Common myeloid progenitor, CD34-positive (primary cell): ENCODE measurements at regions of chr5 and their contacts with region 1.

Region 1: DNA sequence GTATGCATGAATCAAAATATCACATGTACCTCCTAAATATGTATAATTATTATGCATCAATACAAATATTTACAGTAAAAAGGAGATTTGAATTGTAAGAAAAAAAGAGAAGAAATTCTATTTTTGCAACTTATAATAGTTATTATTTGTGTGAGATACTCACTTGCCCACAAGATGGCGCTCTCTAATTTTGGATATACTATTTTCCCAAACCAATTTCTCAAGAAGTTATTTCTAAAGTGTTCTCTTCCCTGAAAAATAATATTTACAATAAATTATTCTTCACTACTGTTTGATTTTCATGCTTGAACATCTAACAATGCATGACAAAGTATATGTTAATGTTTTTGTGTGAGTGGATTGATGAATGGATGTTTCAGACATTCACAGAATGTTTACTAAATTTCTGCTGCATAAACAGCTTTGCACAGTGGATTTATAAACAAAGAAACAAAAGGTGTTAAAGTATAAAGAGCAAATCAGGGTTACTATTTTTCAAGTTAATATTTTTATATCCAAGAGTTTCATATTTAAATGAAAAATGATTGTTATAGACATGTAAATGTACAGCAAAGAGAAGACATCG is 503.4 kb downstream of the PDE4D start:
- DNase-seq: peak; percentile 13 to 48 (median 30)
- H3K4me3 ChIP-seq: no peak overlapping the region
- H3K27ac ChIP-seq: no peak overlapping the region
- H3K4me1 ChIP-seq: no peaks in the 10 kb centered on the region
- H3K27me3 ChIP-seq: no peaks in the 10 kb centered on the region

Region 2: DNA sequence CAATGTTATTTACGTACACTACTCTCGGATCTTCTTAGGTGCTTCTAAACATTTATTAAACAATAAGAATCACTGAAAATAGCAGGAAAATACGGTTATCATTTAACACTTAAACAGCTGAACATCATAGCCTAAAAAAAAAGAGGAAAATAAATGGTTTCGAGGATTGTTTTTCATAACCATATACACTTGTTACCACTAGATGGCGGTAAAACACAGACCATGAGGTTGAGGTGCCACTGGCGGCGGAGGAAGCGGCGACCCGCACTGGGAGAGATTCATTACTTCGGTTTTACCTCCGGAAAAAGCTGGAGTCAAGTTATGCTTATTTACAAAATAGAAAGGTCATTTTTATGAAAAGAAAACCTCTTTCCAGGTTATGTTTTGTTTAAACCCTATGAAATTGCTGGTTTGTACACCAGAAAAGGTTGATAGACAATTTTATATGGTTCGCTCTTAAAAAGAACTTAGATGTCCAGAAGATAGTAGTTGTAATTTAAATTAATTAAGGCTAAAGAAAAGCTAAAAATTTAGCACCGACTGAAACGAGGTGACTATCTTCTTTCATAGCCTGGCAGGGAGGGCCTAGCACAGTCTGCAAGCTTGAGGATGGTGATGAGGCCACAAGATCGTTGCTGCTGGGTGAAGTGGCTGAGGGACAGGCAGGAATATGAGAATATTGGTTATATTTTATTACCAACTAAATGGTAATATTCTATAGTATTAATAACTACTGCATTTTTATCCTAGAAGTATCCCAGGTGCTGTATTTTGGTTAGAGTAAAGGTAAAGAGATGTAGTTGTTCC is 201.5 kb before region 1 on chr5:
- CTCF ChIA-PET with region 1: interaction called, 10 read pairs
- POLR2A ChIA-PET with region 1: no interaction called
- DNase-seq: peak; percentile 69 to 86 (median 84)
- H3K4me3 ChIP-seq: peak overlapping the region in 5 of 7 experiments; percentile 30 to 70 (median 52)
- H3K27ac ChIP-seq: no peak overlapping the region
- H3K4me1 ChIP-seq: peaks cover 0 to 5% (median 2%) of the 10 kb centered on the region in 4 experiments
- H3K27me3 ChIP-seq: no peaks in the 10 kb centered on the region

Region 3: GRCh38 chr5:59506285-59506877 is 116.2 kb after region 1 on chr5:
- CTCF ChIA-PET with region 1: interaction called, 11 read pairs
- POLR2A ChIA-PET with region 1: no interaction called
- DNase-seq: peak; percentile 50 to 77 (median 71)
- H3K4me3 ChIP-seq: no peak overlapping the region
- H3K27ac ChIP-seq: no peak overlapping the region
- H3K4me1 ChIP-seq: peaks cover 0 to 10% (median 0%) of the 10 kb centered on the region in 4 experiments
- H3K27me3 ChIP-seq: no peaks in the 10 kb centered on the region

Region 4: DNA sequence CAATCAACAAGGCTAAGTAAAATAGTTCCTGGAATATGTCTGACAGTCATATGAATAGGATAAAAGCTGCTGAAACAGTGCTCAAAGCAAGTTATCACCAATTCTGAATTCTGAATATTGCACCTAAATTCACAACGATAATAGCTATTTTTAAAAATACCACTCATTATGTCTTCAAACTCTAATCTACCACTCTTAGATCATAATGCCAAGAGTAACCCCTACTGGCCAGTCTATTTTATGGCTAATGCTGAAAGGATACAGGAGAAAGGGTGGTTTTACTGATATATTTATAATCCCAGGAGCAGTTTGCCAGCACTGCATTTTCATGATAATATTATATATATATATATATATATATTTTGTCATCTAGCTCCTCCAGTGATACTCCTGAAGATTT is 270.6 kb after region 1 on chr5:
- CTCF ChIA-PET with region 1: interaction called, 37 read pairs
- POLR2A ChIA-PET with region 1: no interaction called
- DNase-seq: peak; percentile 36 to 56 (median 54)
- H3K4me3 ChIP-seq: no peak overlapping the region
- H3K27ac ChIP-seq: no peak overlapping the region
- H3K4me1 ChIP-seq: peaks cover 21 to 56% (median 38%) of the 10 kb centered on the region in 4 experiments
- H3K27me3 ChIP-seq: no peaks in the 10 kb centered on the region

Region 5: DNA sequence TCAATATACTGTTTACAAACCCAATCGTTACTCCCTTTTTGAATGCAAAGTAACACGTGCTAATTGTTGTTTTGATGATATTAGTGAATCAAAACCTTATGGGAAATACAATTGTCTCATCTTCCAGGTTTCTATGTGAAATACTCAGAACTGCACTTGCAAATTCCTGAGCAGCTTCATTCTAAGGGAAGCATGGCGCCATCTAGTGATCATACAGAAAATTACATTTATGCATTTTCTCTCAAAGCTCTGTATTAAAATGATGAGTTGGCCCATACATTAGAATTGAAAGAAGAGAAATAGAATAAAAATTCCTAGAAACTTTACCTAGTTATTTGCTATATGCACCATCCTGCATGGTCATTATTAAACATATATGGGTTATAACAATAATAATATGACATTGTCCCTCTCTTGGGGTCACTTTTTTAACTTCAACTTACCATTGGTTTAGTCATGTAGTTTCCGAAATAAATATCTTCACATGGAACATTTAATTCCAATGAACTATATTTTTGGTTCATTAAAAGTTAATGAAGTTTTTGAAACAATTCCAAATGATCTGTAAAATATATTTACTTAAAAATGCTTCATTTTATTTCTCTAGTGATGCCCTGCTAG is 283.4 kb after region 1 on chr5:
- CTCF ChIA-PET with region 1: interaction called, 20 read pairs
- POLR2A ChIA-PET with region 1: no interaction called
- DNase-seq: peak; percentile 38 to 70 (median 63)
- H3K4me3 ChIP-seq: no peak overlapping the region
- H3K27ac ChIP-seq: no peak overlapping the region
- H3K4me1 ChIP-seq: no peaks in the 10 kb centered on the region
- H3K27me3 ChIP-seq: no peaks in the 10 kb centered on the region

Region 6: GRCh38 chr5:59799668-59800346 is 409.6 kb after region 1 on chr5:
- CTCF ChIA-PET with region 1: interaction called, 15 read pairs
- POLR2A ChIA-PET with region 1: no interaction called
- DNase-seq: peak; percentile 55 to 70 (median 66)
- H3K4me3 ChIP-seq: peak overlapping the region in 1 of 7 experiments; percentile 55
- H3K27ac ChIP-seq: peak overlapping the region in 1 of 2 experiments; percentile 32
- H3K4me1 ChIP-seq: peaks cover 11 to 31% (median 21%) of the 10 kb centered on the region in 4 experiments
- H3K27me3 ChIP-seq: no peaks in the 10 kb centered on the region